Activated CD4-positive, alpha-beta T cell treated with anti-CD3 and anti-CD28 coated beads for 36 hours (primary cell): ENCODE measurements at regions of chr17 and their contacts with region 1.

Region 1: GRCh38 chr17:64129764-64130558 is at the start of gene ERN1:
- DNase-seq: peak; percentile 97
- ATAC-seq: peak; percentile 84
- H3K4me3 Mint-ChIP-seq: peak within 1 kb of the TSS; percentile 87
- H3K27ac Mint-ChIP-seq: peak within 1 kb of the TSS; percentile 96
- H3K4me1 Mint-ChIP-seq: peaks cover 54% of the 10 kb centered on the region
- H3K27me3 Mint-ChIP-seq: no peaks in the 10 kb centered on the region
- total RNA-seq, gene ERN1: 23.7 to 26.8 TPM

Region 2: DNA sequence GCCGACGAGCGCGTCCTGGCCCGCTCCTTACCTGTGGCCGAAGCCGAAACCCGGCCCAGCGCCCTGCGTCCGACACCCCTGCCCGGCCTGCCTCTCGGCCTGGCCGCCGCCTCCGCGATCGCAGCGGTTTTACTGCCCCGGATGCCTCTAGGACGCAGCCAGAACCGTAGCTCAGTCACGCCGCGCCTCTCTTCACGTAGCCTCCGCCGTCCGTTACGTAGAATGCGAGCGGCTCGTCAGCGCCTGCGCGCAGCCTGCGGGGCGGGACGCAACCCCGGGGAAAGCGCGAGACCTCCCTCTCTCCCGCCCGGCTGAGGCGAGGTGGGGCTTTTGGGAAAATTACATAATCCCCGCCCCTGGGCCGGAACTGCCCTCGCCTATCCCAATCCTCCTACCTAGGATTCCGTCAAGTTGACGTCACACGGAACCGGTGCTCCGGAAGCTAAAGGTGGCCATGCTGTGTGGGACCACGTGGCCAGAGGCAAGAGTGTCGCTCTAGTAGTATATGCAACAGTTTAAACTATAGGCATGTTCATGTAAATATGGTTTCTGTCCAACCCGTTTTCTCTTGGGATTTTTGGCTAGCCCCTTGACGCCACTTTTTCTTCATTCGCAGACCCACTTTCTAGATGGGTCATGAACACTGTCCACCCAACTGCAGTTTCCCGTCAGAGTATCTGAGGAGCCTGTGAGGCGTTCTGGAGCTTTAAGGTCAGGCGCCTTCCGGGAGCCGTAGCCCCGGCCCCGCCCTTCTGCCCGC is 356.4 kb before region 1 on chr17 and contains the start of gene CCDC47:
- CTCF ChIA-PET with region 1: no interaction called
- POLR2A ChIA-PET with region 1: no interaction called
- intact Hi-C with region 1: loop called in 1 of 2 experiments (anchors 1 kb)
- DNase-seq: peak; percentile 99
- ATAC-seq: peak; percentile 83
- H3K4me3 Mint-ChIP-seq: peak within 1 kb of the TSS; percentile 98
- H3K27ac Mint-ChIP-seq: peak within 1 kb of the TSS; percentile 97
- H3K4me1 Mint-ChIP-seq: peaks cover 57% of the 10 kb centered on the region
- H3K27me3 Mint-ChIP-seq: no peaks in the 10 kb centered on the region
- total RNA-seq, gene CCDC47: 76.9 to 82.3 TPM

Region 3: DNA sequence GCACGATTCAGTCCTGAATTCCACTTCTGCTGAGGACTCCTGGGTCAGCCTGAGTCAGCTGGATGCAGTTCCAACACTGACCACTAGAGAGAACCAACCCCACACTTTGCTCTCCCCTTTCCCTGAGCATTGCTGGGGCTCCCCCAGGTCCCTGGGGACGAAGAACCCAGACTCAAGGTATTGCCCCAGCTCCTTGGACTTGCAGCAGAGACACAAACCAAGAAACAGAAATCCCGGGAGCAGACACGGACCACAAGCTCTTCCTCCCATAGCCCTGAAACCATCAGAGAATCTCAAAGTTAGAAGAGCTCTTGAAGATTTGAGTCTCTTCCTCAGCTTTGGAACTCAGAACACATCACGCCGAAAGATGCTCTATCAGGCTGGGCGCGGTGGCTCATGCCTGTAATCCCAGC is 210.6 kb before region 1 on chr17:
- CTCF ChIA-PET with region 1: interaction called, 32 read pairs
- POLR2A ChIA-PET with region 1: interaction called, 3 read pairs
- intact Hi-C with region 1: loop called (anchors 1 to 2 kb)
- DNase-seq: peak; percentile 84
- ATAC-seq: peak; percentile 99
- H3K4me3 Mint-ChIP-seq: no peak overlapping the region
- H3K27ac Mint-ChIP-seq: no peak overlapping the region
- H3K4me1 Mint-ChIP-seq: peaks cover 6% of the 10 kb centered on the region
- H3K27me3 Mint-ChIP-seq: no peaks in the 10 kb centered on the region

Region 4: DNA sequence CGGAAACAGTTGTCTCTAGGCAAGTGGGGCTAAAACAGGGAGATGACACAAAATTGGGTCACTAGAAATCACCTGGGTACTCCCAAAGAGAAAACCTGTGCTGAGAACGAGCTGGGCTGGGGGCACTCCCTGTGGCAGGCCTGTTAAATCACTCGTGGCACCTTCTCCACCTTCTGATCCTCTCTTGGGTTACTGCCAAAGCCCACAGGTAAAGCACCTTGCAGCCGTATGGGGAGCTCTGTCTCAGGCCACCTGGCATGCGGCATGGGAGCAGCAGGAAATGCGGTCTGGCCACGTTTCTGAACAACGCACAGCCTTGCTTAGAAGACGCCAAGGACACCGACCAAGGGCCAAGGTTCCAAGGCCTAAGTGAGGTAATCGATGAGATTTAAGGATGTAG is 88.0 kb before region 1 on chr17:
- CTCF ChIA-PET with region 1: interaction called, 27 read pairs
- POLR2A ChIA-PET with region 1: no interaction called
- intact Hi-C with region 1: no loop called
- DNase-seq: no peak
- ATAC-seq: no peak
- H3K4me3 Mint-ChIP-seq: no peak overlapping the region
- H3K27ac Mint-ChIP-seq: peak overlapping the region; percentile 44
- H3K4me1 Mint-ChIP-seq: peaks cover 8% of the 10 kb centered on the region
- H3K27me3 Mint-ChIP-seq: no peaks in the 10 kb centered on the region

Region 5: DNA sequence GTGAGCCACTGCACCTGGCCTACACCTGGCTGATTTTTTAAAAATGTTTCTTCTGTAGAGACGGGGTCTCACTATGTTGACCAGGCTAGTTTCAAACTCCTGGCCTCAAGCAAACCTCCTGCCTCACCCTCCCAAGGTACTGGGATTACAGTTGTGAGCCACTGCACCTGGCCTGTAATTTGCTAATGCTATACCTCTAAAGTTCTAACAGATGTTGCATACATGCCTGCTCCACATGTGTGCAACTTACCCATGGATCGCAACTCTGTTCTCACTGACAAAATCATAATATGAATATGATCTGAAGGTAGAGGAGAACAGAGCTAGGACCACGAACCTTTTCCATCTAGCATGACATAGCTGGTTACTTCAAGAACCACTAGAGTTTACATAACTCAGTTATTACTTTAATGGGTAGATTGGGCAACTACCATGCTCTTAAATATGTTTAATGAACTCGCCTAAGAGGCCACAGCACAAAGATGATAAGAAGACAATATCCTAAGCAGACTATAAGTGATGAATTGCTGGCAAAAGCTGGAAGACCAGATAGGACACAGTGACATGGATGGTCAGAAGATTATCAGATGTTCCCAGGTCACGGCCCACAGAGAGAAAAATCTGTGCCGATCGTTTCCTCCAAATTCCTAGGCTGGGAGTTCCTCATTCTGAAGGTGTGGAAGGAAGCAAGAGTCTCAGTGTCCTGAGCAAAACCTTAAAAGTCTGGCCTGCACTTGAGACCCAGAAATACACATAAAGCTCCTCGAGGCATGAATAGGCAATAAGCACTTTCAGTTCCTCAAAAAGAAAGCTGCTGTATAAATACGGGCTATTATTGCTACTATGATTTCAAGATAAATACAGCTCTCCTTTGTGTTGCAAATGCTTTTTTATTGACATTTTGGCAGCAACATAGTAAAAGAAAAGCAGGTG is 55.9 kb before region 1 on chr17:
- CTCF ChIA-PET with region 1: interaction called, 172 read pairs
- POLR2A ChIA-PET with region 1: no interaction called
- intact Hi-C with region 1: no loop called
- DNase-seq: no peak
- ATAC-seq: no peak
- H3K4me3 Mint-ChIP-seq: no peak overlapping the region
- H3K27ac Mint-ChIP-seq: peak overlapping the region; percentile 27
- H3K4me1 Mint-ChIP-seq: peaks cover 24% of the 10 kb centered on the region
- H3K27me3 Mint-ChIP-seq: no peaks in the 10 kb centered on the region

Region 6: DNA sequence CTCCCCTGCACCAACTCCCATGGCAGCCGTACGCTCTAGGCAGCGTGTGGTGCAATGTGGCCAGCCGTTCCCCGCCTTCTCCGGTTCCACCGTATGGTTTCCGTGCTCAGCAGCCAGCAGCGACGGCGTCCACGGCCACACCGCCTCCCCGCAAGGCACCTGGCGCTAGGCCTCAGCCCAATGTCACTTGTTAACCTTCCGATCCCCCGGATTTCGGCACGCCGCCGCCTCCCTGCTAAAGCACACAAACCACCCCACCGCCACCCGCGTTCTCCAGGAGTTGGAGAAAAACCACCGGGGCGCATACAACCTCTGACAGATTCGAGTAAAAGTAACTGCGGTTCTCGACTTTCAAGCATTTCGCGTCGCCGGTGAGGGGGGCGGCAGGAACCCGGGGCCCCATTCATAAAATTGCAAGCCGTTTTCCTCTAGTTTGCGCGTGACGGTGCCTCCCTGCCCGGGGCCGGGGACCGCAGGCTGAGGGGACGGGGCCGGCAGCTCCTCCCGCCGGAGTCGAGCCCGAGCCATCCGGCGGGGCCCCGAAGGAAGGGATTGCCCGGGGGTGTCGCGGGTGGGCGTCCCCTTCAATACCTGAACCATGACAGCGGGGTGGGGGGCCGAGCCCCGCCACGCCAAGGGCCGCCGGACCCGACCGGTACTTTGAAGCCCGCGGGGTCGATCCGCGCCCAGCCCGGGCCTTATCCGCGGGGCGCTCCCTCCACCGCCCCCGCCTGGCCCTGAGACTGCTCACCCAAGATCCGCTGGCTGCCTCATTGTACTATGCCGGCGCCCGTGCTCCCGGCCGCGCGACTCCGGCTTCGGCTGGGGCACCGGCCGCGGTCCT is 132.7 kb after region 1 on chr17 and contains the start of gene TEX2:
- CTCF ChIA-PET with region 1: interaction called, 4 read pairs
- POLR2A ChIA-PET with region 1: no interaction called
- intact Hi-C with region 1: loop called (anchors 1 kb)
- DNase-seq: peak; percentile 78
- ATAC-seq: peak; percentile 27
- H3K4me3 Mint-ChIP-seq: peak within 1 kb of the TSS; percentile 96
- H3K27ac Mint-ChIP-seq: peak within 1 kb of the TSS; percentile 92
- H3K4me1 Mint-ChIP-seq: peaks cover 36% of the 10 kb centered on the region
- H3K27me3 Mint-ChIP-seq: no peaks in the 10 kb centered on the region
- total RNA-seq, gene TEX2: 15.2 to 15.8 TPM